GM13977 (cell line): ENCODE measurements at regions of chr20 and their contacts with region 1.

Region 1: DNA sequence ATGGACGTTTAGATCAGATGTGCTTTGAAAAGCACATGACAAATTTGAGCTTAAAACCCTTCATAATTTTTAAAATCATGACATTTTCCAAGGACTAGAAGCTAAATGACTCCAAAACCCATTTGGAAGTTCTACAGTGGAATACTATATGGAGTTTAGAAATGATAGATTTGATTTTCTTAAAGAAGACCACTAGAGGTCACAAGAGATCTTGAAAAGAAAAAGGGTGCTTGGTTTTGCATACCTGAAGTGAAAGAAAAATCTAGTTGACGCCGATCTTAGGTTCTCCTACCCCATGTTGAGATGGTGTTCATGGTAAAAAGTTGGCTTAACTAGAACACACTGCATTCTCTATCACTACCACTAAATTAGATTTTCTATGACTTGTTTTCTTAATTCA is 31.5 kb downstream of the CFAP61 start:
- DNase-seq: peak; percentile 42
- CTCF ChIP-seq: peak; percentile 44

Region 2: GRCh38 chr20:19875331-19876221 is 208.2 kb before region 1 on chr20:
- in situ Hi-C with region 1: no loop called
- DNase-seq: no peak
- CTCF ChIP-seq: no peak

Region 3: GRCh38 chr20:19913927-19914614 is 169.7 kb before region 1 on chr20:
- in situ Hi-C with region 1: no loop called
- DNase-seq: peak; percentile 28
- CTCF ChIP-seq: no peak

Region 4: GRCh38 chr20:20237093-20237959 is 153.5 kb after region 1 on chr20:
- in situ Hi-C with region 1: loop called (anchors 25 kb)
- DNase-seq: peak; percentile 72
- CTCF ChIP-seq: peak; percentile 78

Region 5: GRCh38 chr20:20568604-20569205 is 484.9 kb after region 1 on chr20:
- in situ Hi-C with region 1: loop called (anchors 25 kb)
- DNase-seq: peak; percentile 29
- CTCF ChIP-seq: peak; percentile 78